ENCODE measurements at regions of chr17 and their contacts with region 1.

Region 1: GRCh38 chr17:43316522-43317142 is 82.2 kb upstream of the ARL4D start:
- H3K4me3 ChIP-seq: no peak overlapping the region
- H3K27ac ChIP-seq: no peak overlapping the region
- H3K4me1 ChIP-seq: no peaks in the 10 kb centered on the region
- CTCF ChIP-seq: no peak

Region 2: DNA sequence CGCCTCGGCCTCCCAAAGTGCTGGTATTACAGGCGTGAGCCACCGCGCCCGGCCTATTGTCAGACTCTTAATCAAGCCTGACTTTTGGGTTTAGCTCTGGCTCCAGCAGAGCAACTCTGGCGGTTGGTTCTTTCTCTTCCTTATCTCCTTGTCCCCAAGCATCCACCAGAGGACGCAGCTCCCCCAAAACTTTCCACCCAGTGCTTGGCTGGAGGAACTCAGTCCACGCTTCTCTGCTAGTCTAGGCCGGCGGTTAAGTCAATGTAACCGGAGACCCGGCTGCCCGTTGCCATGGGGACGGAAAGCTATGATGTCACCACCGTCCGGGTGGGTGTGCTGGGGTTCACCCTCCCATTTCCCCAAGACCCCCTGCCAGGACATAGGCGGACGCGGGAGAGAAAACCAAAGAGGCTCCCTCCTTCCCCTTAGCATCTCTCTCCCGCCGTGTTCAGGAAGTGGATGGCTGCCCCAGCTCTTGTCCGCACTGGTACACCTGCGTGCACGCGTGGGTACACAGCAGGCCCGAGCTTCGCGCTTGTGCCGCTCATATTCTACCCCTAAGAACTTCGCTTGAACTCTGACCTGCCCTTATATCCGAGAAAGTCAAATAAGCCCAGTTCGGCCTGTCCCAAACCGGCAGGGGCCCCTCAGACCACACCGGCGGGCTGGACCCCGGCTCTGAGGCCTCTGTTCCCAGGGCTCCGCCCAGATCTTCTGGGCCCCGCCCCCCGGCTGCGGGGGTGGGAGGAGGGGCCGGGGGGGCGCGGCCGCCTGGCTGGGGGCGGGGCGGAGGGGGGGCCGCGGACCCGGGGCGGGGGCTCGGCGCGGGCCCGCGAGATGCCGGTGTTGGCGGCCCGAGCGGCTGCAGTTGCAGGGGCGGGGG is 292.0 kb before region 1 on chr17 and contains the start of gene RND2:
- CTCF ChIA-PET with region 1: interaction called, 4 read pairs
- POLR2A ChIA-PET with region 1: interaction called, 10 read pairs
- H3K4me3 ChIP-seq: peak within 1 kb of the TSS; percentile 52
- H3K27ac ChIP-seq: peak within 1 kb of the TSS; percentile 62
- H3K4me1 ChIP-seq: peaks cover 2% of the 10 kb centered on the region
- CTCF ChIP-seq: peak; percentile 97

Region 3: DNA sequence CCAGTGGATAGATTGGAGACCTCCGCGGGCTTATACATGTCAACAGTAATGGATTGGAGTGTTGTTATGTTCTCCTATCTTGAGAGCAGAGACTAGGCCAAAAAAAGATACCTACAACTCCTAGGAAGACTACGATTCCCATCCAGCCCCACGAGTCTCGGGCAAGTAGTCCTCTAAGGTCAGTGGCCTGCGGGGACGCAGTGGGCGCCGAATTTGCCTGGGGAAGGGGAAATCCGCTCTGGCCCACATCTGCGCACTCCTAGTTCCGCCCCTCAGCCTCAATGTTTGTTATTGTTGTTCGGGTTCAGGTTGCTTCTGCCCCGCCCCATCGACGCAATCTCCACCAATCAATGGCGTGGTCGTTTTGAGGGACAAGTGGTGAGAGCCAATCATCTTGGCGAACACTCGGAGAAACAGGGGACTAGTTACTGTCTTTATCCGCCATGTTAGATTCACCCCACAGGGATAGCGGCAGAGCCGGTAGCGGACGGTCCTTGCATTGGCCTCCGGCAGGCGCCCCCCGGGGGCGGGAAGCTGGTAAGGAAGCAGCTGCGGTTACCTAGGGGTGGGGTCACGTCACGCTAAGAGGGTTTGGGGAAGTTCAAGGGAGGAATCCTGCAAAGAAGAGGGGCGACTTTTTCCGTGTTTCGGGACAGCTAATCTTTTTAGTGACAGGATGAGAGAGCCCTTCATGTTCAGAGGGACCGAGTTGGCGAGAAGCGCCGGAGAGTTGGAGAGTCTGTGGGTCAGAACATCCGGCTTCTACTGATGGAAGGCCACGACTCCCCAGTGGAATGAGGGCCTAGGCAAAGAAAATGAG is 145.7 kb before region 1 on chr17 and contains the start of gene NBR1:
- CTCF ChIA-PET with region 1: no interaction called
- POLR2A ChIA-PET with region 1: interaction called, 26 read pairs
- H3K4me3 ChIP-seq: peak within 1 kb of the TSS; percentile 91
- H3K27ac ChIP-seq: peak within 1 kb of the TSS; percentile 72
- H3K4me1 ChIP-seq: peaks cover 4% of the 10 kb centered on the region; the same call in 1 of the 2 replicates
- CTCF ChIP-seq: peak; percentile 76; the same call in 1 of the 2 replicates

Region 4: GRCh38 chr17:43224146-43224695 is 92.4 kb before region 1 on chr17:
- CTCF ChIA-PET with region 1: interaction called, 3 read pairs
- POLR2A ChIA-PET with region 1: interaction called, 10 read pairs
- H3K4me3 ChIP-seq: no peak overlapping the region
- H3K27ac ChIP-seq: no peak overlapping the region
- H3K4me1 ChIP-seq: no peaks in the 10 kb centered on the region
- CTCF ChIP-seq: no peak

Region 5: GRCh38 chr17:43367737-43368242 is 51.2 kb after region 1 on chr17:
- CTCF ChIA-PET with region 1: no interaction called
- POLR2A ChIA-PET with region 1: interaction called, 38 read pairs
- H3K4me3 ChIP-seq: no peak overlapping the region
- H3K27ac ChIP-seq: peak overlapping the region; percentile 99
- H3K4me1 ChIP-seq: peaks cover 20% of the 10 kb centered on the region; the same call in 1 of the 2 replicates
- CTCF ChIP-seq: no peak

Measured in HEK293 (cell line).